PC-9 (cell line): ENCODE measurements at regions of chr4 and their contacts with region 1.

Region 1: DNA sequence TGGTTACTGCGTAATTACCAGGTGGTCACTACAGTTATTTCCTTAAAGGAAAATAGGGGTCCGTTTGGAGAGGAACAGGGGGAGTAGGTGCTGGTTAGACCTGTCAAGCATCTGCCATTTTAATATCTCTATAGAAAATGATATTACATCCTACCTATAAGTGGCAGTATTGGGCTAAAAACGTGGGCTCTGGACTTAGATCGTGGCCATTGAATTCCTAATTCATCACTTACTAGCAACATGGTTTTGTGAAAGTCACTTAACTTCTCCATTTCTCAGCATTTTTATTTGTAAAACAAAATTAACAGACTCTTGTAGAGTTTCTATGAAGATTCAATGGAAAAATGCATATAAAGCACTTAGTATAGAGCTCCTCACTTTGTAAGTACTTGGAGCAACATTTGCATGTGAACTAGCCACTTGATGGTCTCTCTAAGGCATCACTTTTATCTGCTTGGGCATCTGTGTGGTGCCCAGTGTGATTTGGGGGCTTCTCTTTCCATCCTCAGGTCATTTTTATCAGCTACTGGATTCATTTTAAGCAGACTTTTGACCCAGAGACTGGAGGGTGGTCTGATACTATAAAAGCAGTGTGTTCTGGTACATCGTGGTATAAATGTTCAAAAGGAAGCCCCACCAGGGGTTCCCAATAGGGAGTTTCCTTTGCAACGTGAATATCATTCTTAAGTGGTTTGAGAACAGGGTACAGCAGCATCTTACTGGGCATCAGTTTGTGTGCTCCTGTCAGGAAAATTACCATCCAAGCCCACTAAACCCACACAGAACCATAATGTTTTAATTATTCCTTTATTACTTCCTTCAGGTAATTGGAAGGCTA is 42.7 kb upstream of the RASSF6 start:
- DNase-seq: no peak
- H3K4me3 ChIP-seq: no peak overlapping the region
- H3K27ac ChIP-seq: no peak overlapping the region
- H3K4me1 ChIP-seq: no peaks in the 10 kb centered on the region
- H3K27me3 ChIP-seq: no peaks in the 10 kb centered on the region
- CTCF ChIP-seq: peak; percentile 72

Region 2: DNA sequence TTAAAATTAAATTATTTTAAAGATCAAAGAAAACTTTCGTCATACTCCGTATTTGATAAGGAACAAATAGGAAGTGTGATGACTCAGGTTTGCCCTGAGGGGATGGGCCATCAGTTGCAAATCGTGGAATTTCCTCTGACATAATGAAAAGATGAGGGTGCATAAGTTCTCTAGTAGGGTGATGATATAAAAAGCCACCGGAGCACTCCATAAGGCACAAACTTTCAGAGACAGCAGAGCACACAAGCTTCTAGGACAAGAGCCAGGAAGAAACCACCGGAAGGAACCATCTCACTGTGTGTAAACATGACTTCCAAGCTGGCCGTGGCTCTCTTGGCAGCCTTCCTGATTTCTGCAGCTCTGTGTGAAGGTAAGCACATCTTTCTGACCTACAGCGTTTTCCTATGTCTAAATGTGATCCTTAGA is 77.4 kb after region 1 on chr4 and contains the start of gene CXCL8:
- CTCF ChIA-PET with region 1: no interaction called
- POLR2A ChIA-PET with region 1: no interaction called
- intact Hi-C with region 1: loop called (anchors 5 kb)
- DNase-seq: peak; percentile 56 to 83
- H3K4me3 ChIP-seq: peak within 1 kb of the TSS; percentile 24; the same call in 1 of the 2 replicates
- H3K27ac ChIP-seq: peak within 1 kb of the TSS; percentile 78
- H3K4me1 ChIP-seq: peaks cover 22% of the 10 kb centered on the region
- H3K27me3 ChIP-seq: no peaks in the 10 kb centered on the region
- CTCF ChIP-seq: no peak
- total RNA-seq, gene CXCL8: 0.35 and 0.38 TPM in 2 replicates

Region 3: GRCh38 chr4:73864365-73864764 is 201.4 kb after region 1 on chr4:
- CTCF ChIA-PET with region 1: no interaction called
- POLR2A ChIA-PET with region 1: interaction called, 8 read pairs
- intact Hi-C with region 1: loop called (anchors 1 kb)
- DNase-seq: peak in 1 of 2 experiments; percentile 8
- H3K4me3 ChIP-seq: no peak overlapping the region
- H3K27ac ChIP-seq: no peak overlapping the region
- H3K4me1 ChIP-seq: no peaks in the 10 kb centered on the region
- H3K27me3 ChIP-seq: no peaks in the 10 kb centered on the region
- CTCF ChIP-seq: peak; percentile 57; the same call in 1 of the 2 replicates

Region 4: DNA sequence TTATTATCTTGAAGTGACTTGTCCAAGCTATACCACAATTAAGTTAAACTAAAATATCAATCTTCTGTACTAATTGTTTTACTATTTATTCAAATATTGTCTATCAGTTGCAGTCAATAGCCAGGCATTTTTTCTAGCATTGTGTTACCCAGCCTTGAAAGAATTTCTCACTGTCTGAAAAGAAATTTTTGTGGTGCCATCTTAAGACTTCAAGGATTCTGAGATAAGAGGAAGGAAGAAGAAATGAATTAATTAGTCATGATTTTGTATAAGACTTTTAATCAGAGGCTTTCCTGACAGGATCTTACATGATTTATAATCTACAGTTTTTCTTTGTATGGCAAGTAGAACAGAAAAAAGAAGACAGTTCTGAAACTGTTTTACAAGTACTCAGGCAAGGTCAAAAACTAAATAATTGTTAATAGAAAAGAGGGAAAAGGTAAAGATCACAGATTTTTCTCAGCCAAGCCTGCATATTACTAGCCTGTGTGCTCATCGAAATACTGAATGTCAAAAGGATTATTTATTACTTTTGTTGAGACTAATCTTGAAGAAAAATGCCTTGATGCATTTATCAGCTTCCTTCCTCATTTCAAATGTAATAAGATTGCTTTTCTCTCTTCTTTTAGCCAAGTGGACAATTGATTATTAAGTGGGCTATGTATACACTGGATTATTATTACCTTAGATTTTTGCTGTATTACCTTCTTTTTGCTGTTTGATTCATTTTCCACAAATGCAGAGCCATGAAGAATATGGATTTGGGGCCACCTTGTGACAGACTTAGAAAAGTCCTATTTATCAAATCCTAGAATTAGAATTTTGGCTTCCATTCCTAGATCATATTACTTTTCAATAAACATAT is 260.1 kb after region 1 on chr4:
- CTCF ChIA-PET with region 1: no interaction called
- POLR2A ChIA-PET with region 1: no interaction called
- intact Hi-C with region 1: loop called (anchors 2 kb)
- DNase-seq: no peak
- H3K4me3 ChIP-seq: no peak overlapping the region
- H3K27ac ChIP-seq: no peak overlapping the region
- H3K4me1 ChIP-seq: 0 out of 2 replicates have a peak, but pooled peaks cover under 1% of the 10 kb centered on the region
- H3K27me3 ChIP-seq: no peaks in the 10 kb centered on the region
- CTCF ChIP-seq: peak; percentile 61

Region 5: GRCh38 chr4:74038161-74039064 is 375.5 kb after region 1 on chr4 and contains the start of gene CXCL3:
- CTCF ChIA-PET with region 1: no interaction called
- POLR2A ChIA-PET with region 1: interaction called, 3 read pairs
- intact Hi-C with region 1: loop called (anchors 10 kb)
- DNase-seq: peak in 1 of 2 experiments; percentile 44
- H3K4me3 ChIP-seq: peak within 1 kb of the TSS; percentile 79
- H3K27ac ChIP-seq: no peak within 1 kb of the TSS
- H3K4me1 ChIP-seq: peaks cover 6% of the 10 kb centered on the region; the same call in 1 of the 2 replicates
- H3K27me3 ChIP-seq: no peaks in the 10 kb centered on the region
- CTCF ChIP-seq: peak; percentile 50; the same call in 1 of the 2 replicates
- total RNA-seq, gene CXCL3: not detected in 2 replicates